Activated CD4-positive, alpha-beta memory T cell treated with anti-CD3 and anti-CD28 coated beads for 36 hours (primary cell): ENCODE measurements at regions of chr19 and their contacts with region 1.

Region 1: GRCh38 chr19:21020298-21021227 is at the start of gene ZNF430:
- DNase-seq: peak; percentile 97
- H3K4me3 Mint-ChIP-seq: peak within 1 kb of the TSS; percentile 100
- H3K27ac Mint-ChIP-seq: peak within 1 kb of the TSS; percentile 99
- H3K4me1 Mint-ChIP-seq: peaks cover 41% of the 10 kb centered on the region
- H3K27me3 Mint-ChIP-seq: no peaks in the 10 kb centered on the region
- total RNA-seq, gene ZNF430: 18.9 to 20.9 TPM

Region 2: GRCh38 chr19:20237761-20238623 is 782.6 kb before region 1 on chr19:
- CTCF ChIA-PET with region 1: no interaction called
- POLR2A ChIA-PET with region 1: no interaction called
- intact Hi-C with region 1: loop called (anchors 10 kb)
- DNase-seq: peak; percentile 96
- H3K4me3 Mint-ChIP-seq: peak overlapping the region; percentile 98
- H3K27ac Mint-ChIP-seq: peak overlapping the region; percentile 84
- H3K4me1 Mint-ChIP-seq: peaks cover 7% of the 10 kb centered on the region
- H3K27me3 Mint-ChIP-seq: no peaks in the 10 kb centered on the region

Region 3: DNA sequence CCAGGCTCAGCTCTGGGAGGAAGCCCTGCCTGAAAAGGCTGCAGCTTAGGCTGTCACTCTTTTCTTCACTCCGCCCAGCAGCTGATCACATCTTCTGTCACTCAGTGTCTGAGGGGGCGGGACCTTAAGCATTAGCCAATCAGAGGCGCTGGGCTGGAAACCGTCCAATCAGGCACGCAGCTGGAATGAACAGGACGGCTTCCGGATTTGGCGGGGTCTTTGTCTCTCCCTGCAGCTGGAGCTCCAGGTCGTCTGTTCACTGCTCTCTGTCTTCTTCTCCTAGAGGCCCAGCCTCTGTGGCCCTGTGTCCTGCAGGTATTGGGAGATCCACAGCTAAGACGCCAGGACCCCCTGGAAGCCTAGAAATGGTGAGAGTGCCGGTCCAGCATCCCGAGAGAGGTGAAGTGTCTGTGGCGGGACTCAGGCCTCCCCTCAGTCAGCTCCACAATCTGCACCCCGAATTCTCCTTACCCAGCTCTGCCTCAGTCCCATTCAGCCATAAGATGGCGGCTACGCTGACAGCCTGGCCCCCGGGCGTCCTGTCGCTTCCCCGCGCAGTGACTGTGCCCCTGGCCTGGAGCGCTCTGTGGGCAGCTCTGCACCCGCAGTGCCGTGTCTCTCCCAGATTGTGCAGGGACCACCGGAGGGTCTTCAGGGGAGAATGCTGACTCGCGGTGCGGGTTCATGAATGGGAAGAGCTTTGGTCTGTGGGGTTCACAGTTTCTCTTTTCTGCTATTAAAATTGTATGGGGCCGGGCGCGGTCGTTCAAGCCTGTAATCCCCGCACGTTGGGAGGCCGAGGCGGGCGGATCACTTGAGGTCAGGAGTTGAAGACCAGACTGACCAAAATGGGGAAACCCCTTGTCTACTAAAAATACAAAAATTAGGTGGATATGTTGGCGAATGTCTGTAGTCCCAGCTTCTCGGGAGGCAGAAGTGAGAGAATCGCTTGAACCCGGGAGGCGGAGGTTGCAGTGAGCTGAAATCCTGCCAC is 244.2 kb before region 1 on chr19 and contains the start of gene ZNF66:
- CTCF ChIA-PET with region 1: no interaction called
- POLR2A ChIA-PET with region 1: interaction called, 7 read pairs
- intact Hi-C with region 1: loop called (anchors 10 kb)
- DNase-seq: peak; percentile 97
- H3K4me3 Mint-ChIP-seq: peak within 1 kb of the TSS; percentile 100
- H3K27ac Mint-ChIP-seq: peak within 1 kb of the TSS; percentile 97
- H3K4me1 Mint-ChIP-seq: peaks cover 16% of the 10 kb centered on the region
- H3K27me3 Mint-ChIP-seq: no peaks in the 10 kb centered on the region
- total RNA-seq, gene ZNF66: 5.0 to 6.0 TPM

Region 4: GRCh38 chr19:20999731-21000352 is 20.7 kb before region 1 on chr19:
- CTCF ChIA-PET with region 1: interaction called, 5 read pairs
- POLR2A ChIA-PET with region 1: interaction called, 15 read pairs
- intact Hi-C with region 1: loop called (anchors 2 kb)
- DNase-seq: peak; percentile 95
- H3K4me3 Mint-ChIP-seq: peak overlapping the region; percentile 97
- H3K27ac Mint-ChIP-seq: peak overlapping the region; percentile 84
- H3K4me1 Mint-ChIP-seq: peaks cover 9% of the 10 kb centered on the region
- H3K27me3 Mint-ChIP-seq: no peaks in the 10 kb centered on the region

Region 5: GRCh38 chr19:21109116-21109515 is 88.6 kb after region 1 on chr19:
- CTCF ChIA-PET with region 1: no interaction called
- POLR2A ChIA-PET with region 1: no interaction called
- intact Hi-C with region 1: no loop called
- DNase-seq: no peak
- H3K4me3 Mint-ChIP-seq: no peak overlapping the region
- H3K27ac Mint-ChIP-seq: no peak overlapping the region
- H3K4me1 Mint-ChIP-seq: no peaks in the 10 kb centered on the region
- H3K27me3 Mint-ChIP-seq: no peaks in the 10 kb centered on the region

Region 6: GRCh38 chr19:21141787-21142464 is 121.4 kb after region 1 on chr19 and contains the start of gene ZNF431:
- CTCF ChIA-PET with region 1: no interaction called
- POLR2A ChIA-PET with region 1: interaction called, 12 read pairs
- intact Hi-C with region 1: loop called (anchors 2 kb)
- DNase-seq: peak; percentile 94
- H3K4me3 Mint-ChIP-seq: peak within 1 kb of the TSS; percentile 96
- H3K27ac Mint-ChIP-seq: peak within 1 kb of the TSS; percentile 90
- H3K4me1 Mint-ChIP-seq: peaks cover 41% of the 10 kb centered on the region
- H3K27me3 Mint-ChIP-seq: no peaks in the 10 kb centered on the region
- total RNA-seq, gene ZNF431: 16.9 to 17.1 TPM

Region 7: DNA sequence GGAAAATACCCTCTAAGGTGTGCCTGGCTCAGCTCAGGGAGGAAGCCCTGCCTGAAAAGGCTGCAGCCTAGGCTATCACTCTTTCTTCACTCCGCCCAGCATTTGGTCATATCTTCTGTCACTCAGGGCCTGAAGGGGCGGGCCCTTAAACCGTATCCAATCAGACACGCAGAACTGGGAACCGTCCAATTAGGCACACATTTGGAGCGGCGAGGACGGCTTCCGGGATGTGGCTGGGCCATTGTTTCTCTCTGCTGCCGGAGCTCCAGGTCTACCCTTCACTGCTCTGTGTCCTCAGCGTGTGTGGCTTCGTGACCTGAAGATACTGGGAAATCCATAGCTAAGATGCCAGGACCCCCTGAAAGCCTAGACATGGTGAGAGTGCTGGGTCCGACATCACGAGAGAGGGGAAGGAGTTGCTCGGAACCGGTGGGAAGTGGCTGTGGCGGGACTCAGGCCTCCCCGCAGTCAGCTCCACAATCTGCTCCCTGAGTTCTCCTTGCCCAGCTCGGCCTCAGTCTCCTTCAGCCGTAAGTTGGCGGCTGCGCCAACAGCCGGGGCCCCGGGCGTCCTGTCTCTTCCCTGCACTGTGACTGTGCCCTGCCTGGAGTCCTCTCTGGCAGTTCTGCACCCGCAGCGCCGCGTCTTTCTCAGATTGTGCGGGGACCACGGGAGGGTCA is 376.5 kb after region 1 on chr19 and contains the start of gene ZNF493:
- CTCF ChIA-PET with region 1: no interaction called
- POLR2A ChIA-PET with region 1: no interaction called
- intact Hi-C with region 1: loop called (anchors 2 kb)
- DNase-seq: peak; percentile 95
- H3K4me3 Mint-ChIP-seq: peak within 1 kb of the TSS; percentile 95
- H3K27ac Mint-ChIP-seq: peak within 1 kb of the TSS; percentile 87
- H3K4me1 Mint-ChIP-seq: peaks cover 24% of the 10 kb centered on the region
- H3K27me3 Mint-ChIP-seq: no peaks in the 10 kb centered on the region
- total RNA-seq, gene ZNF493: 9.6 to 11.1 TPM

Region 8: GRCh38 chr19:21835810-21836444 is 815.4 kb after region 1 on chr19 and contains the start of gene ZNF43:
- CTCF ChIA-PET with region 1: no interaction called
- POLR2A ChIA-PET with region 1: no interaction called
- intact Hi-C with region 1: loop called (anchors 5 kb)
- DNase-seq: peak; percentile 96
- H3K4me3 Mint-ChIP-seq: peak within 1 kb of the TSS; percentile 95
- H3K27ac Mint-ChIP-seq: peak within 1 kb of the TSS; percentile 99
- H3K4me1 Mint-ChIP-seq: peaks cover 37% of the 10 kb centered on the region
- H3K27me3 Mint-ChIP-seq: no peaks in the 10 kb centered on the region
- total RNA-seq, gene ZNF43: 25.2 to 25.3 TPM